Sigmoid colon (tissue), 7 donors: ENCODE measurements at regions of chr1 and their contacts with region 1.

Region 1: DNA sequence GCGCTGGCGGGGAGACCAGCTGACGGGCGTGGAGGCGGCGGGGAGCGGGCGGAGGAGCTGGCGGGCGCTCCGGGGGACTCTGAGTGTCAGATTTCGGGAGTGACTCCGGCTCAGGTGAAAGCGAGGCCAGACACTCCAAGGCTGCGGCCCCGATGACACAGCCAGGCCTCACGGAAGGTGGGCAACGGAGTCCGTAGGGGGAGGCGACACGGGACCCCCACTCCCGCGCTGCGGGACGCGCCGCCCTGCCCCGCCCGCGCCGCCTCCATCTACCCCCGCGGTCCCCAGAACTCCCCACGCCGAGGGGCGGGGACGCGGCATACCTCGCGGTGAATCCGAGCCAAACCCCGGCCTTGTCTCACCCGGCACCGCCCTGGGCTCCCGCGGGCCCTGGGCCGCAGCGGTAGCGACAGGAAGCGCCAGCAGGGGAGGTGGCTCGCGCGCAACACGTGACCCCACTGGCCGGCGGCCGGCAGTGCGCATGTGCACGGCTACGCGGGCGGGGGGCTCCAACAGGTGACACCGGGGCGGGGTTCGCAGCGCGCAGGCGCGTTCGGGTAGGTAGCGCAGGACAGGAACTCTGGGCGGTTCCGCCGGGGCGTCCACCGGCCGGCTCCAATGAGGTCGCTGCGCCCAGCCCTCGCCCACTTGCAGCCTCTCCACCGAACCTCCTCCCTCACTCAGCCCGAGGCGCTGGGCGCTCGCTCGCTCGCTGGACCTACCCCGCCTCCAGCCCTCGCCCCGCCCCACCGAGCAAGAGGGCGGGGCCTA is at the start of gene CC2D1B:
- DNase-seq: peak; percentile 99
- H3K4me3 ChIP-seq: peak within 1 kb of the TSS; percentile 80 to 96 (median 95)
- H3K27ac ChIP-seq: peak within 1 kb of the TSS; percentile 93 to 96 (median 94)
- H3K4me1 ChIP-seq: peaks cover 0 to 24% (median 21%) of the 10 kb centered on the region in 4 donors
- H3K27me3 ChIP-seq: no peaks in the 10 kb centered on the region
- CTCF ChIP-seq: peak in 1 of 4 experiments; percentile 32
- EP300 ChIP-seq: peak in 1 of 4 donors; percentile 44
- POLR2A ChIP-seq: peak; percentile 78 to 79
- total RNA-seq, gene CC2D1B: 15.6 to 20.8 (median 18.2) TPM

Region 2: GRCh38 chr1:52355436-52355835 is 10.5 kb before region 1 on chr1:
- intact Hi-C with region 1: loop called (anchors 1 kb)
- DNase-seq: no peak
- H3K4me3 ChIP-seq: no peak overlapping the region
- H3K27ac ChIP-seq: no peak overlapping the region
- H3K4me1 ChIP-seq: no peaks in the 10 kb centered on the region
- H3K27me3 ChIP-seq: no peaks in the 10 kb centered on the region
- CTCF ChIP-seq: no peak
- EP300 ChIP-seq: no peak
- POLR2A ChIP-seq: no peak

Region 3: GRCh38 chr1:52601519-52601918 is 235.6 kb after region 1 on chr1:
- intact Hi-C with region 1: no loop called
- DNase-seq: no peak
- H3K4me3 ChIP-seq: peak overlapping the region in 3 of 4 donors; percentile 62 to 71 (median 65)
- H3K27ac ChIP-seq: peak overlapping the region in 3 of 4 donors; percentile 83 to 89 (median 84)
- H3K4me1 ChIP-seq: peaks cover 0 to 33% (median 26%) of the 10 kb centered on the region in 4 donors
- H3K27me3 ChIP-seq: no peaks in the 10 kb centered on the region
- CTCF ChIP-seq: no peak
- EP300 ChIP-seq: no peak
- POLR2A ChIP-seq: no peak